Spleen (tissue), 13 donors: ENCODE measurements at regions of chr9 and their contacts with region 1.

Region 1: DNA sequence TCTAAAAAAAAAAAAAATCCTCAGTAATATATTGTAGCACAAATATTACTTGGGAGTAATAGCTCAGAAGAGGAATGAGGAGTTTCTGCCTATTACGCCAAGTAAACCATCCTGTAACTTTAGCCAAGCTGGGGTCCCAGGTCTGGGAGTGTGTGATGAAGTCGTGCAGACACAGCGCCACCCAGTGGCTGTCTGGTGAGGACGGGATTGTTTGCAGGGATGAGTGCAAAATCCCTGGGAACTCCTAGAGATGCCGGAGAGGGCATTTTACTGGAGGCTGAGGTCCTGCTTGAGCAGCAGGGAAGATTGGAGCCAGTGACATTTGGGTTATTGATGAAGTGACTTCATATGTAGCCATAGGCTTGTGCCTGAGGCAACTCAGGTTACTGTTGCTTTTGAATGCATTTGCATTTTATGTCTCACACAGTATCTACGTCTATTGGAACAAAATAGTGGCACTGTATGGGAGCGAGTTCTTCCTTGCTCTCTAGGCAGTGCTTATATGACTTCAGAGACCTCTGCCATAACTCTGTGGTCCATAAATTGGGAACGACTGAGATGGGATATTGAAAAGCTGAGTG is 72.8 kb downstream of the PSAT1 start:
- DNase-seq: peak; percentile 83
- H3K4me3 ChIP-seq: no peak overlapping the region
- H3K27ac ChIP-seq: no peak overlapping the region
- H3K4me1 ChIP-seq: no peaks in the 10 kb centered on the region
- H3K27me3 ChIP-seq: peaks cover 0 to 36% (median 5%) of the 10 kb centered on the region in 7 donors
- CTCF ChIP-seq: peak; percentile 27 to 80 (median 63)
- POLR2A ChIP-seq: no peak

Region 2: DNA sequence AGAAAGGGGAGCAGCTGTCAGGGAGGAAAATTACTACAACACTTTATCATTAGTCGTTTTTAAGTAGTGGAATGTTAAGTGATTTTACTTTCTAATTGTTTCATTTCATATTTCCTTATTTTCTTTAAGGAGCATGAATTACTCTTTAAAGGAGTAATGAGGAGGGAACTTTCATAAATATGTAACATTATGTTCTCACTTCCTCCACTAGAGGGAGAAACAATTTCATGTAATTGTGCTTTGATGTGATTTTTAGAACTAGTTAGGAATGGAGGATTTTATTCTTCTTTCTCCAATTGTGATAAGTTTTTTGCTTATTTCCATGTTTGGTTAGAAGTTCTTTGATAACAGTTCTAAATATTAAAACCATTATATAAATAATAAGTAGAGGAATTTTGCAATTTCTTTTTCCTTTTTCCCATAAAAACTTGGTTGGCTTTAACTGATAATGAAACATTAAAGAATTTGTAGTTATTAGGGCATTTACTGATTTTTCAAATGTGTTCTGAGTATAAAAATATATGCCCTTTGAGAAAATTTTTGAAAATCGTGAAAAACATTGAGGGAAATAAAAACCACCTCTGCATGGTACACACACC is 108.2 kb before region 1 on chr9:
- intact Hi-C with region 1: loop called (anchors 5 kb)
- DNase-seq: no peak
- H3K4me3 ChIP-seq: no peak overlapping the region
- H3K27ac ChIP-seq: no peak overlapping the region
- H3K4me1 ChIP-seq: no peaks in the 10 kb centered on the region
- H3K27me3 ChIP-seq: no peaks in the 10 kb centered on the region
- CTCF ChIP-seq: peak in 10 of 11 experiments; percentile 11 to 64 (median 60)
- POLR2A ChIP-seq: no peak

Region 3: GRCh38 chr9:78296893-78297671 is 72.6 kb before region 1 on chr9 and contains the start of gene PSAT1:
- intact Hi-C with region 1: no loop called
- DNase-seq: peak; percentile 93
- H3K4me3 ChIP-seq: peak within 1 kb of the TSS; percentile 67 to 96 (median 72)
- H3K27ac ChIP-seq: peak within 1 kb of the TSS in 7 of 8 donors; percentile 32 to 73 (median 63)
- H3K4me1 ChIP-seq: peaks cover 4 to 33% (median 27%) of the 10 kb centered on the region in 6 donors
- H3K27me3 ChIP-seq: peaks cover 0 to 54% (median 26%) of the 10 kb centered on the region in 7 donors
- CTCF ChIP-seq: peak in 5 of 11 experiments; percentile 16 to 46 (median 30)
- POLR2A ChIP-seq: no peak
- total RNA-seq, gene PSAT1: 4.2 to 14.0 (median 6.8) TPM

Region 4: GRCh38 chr9:78468231-78468630 is 98.5 kb after region 1 on chr9:
- intact Hi-C with region 1: no loop called
- DNase-seq: no peak
- H3K4me3 ChIP-seq: no peak overlapping the region
- H3K27ac ChIP-seq: no peak overlapping the region
- H3K4me1 ChIP-seq: no peaks in the 10 kb centered on the region
- H3K27me3 ChIP-seq: no peaks in the 10 kb centered on the region
- CTCF ChIP-seq: no peak
- POLR2A ChIP-seq: no peak